Breast epithelium (tissue), 4 donors: ENCODE measurements at regions of chr12 and their contacts with region 1.

Region 1: DNA sequence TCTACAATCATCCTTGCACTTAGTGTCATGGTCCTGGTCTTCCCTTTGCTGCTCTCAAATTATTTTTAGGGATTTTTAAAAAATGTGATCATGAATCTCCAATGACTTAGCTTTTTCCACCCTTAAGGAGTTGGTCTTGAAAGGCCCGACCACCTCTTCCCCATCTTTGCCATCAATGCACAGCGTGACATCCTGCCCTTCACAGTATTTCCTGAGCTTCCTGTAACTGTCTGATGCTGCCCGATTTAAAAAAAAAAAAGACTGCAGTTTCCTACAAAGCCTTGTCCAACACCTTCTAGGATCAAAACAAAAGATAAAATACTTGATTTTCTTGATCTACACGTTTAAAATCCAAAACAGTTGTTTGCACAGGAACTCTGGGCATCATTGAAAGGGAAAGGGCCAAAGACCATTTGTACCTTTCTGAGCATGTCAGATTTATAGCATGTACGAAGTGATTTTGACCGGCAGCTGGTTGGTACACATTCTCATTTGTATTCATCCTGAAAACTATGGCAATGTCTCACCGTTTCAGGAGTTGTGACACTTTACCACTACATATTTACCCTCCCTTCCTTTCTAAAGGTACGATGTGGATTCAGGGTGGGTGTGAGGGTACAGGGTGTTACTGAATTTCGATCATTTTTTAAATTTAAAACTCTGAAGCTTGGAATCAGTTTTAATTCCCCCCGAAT is 7.4 kb upstream of the ELK3 start:
- DNase-seq: no peak
- H3K4me3 ChIP-seq: no peak overlapping the region
- H3K27ac ChIP-seq: no peak overlapping the region
- H3K4me1 ChIP-seq: no peaks in the 10 kb centered on the region
- H3K27me3 ChIP-seq: no peaks in the 10 kb centered on the region
- CTCF ChIP-seq: no peak
- POLR2A ChIP-seq: no peak

Region 2: GRCh38 chr12:96070670-96071279 is 116.0 kb before region 1 on chr12:
- intact Hi-C with region 1: loop called (anchors 10 kb)
- DNase-seq: peak in 1 of 2 donors; percentile 18
- H3K4me3 ChIP-seq: no peak overlapping the region
- H3K27ac ChIP-seq: no peak overlapping the region
- H3K4me1 ChIP-seq: no peaks in the 10 kb centered on the region
- H3K27me3 ChIP-seq: no peaks in the 10 kb centered on the region
- CTCF ChIP-seq: no peak
- POLR2A ChIP-seq: no peak

Region 3: DNA sequence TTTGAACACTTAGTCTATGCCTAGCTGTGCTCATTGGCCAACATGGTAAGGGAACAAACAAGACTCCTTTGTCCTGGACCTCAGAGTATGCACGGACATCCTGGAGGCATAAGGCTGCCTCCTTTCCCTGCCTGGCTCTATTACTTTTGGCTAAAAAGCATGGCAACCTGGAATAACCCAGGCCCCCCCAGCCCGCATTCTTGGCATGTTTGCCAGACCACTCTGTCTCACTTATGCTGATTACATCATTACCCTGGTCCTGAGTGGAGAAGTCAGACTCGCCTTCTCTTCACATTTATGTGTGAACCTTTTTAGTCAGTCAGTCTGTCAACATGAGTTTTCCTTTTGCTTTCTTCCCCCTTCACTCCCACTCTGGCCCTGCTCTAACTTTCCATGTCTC is 50.6 kb before region 1 on chr12:
- intact Hi-C with region 1: no loop called
- DNase-seq: peak in 1 of 2 donors; percentile 82
- H3K4me3 ChIP-seq: no peak overlapping the region
- H3K27ac ChIP-seq: peak overlapping the region; percentile 9 to 50
- H3K4me1 ChIP-seq: no peaks in the 10 kb centered on the region
- H3K27me3 ChIP-seq: no peaks in the 10 kb centered on the region
- CTCF ChIP-seq: no peak
- POLR2A ChIP-seq: no peak